ENCODE measurements at regions of chr3 and their contacts with region 1.

Region 1: DNA sequence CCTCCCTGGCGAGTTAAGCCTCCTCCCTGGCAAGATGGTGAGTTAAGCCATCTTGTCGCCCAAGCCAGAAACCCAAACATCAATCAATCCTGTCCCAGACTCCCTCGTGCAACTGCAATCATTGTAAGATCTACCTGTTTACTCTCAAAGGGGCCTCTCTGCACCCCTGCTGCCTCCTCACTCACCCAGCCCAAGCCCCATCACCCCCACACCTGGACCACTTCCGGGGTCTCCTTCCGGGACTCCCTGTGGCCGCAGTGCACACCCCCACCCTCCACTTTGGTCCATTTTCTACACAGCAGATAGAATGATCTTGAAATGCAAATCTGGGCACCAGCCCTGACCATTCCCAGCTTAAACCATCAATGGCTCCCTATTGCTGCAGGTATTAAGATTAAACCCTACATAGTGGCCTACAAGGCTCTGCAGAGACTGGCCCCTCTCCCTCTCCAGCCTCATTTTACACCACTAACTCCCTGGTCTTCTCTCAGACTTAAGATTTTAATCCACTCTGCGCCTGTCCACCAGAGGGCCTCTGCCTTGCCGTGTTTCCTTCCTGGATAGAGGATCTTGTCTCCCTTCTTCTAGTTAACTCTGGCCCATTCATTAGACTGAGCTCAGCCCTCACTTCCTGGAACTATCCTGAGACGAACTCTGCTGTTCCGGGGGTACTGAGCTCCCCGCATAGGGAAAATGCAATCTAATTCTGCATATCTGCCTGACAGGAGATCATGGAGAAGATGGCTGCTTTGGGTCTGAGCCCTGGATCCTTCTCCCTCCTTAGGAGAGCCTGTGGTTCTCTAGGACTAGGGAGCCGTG is 41.9 kb upstream of the SLC6A1 start:
- DNase-seq: peak; percentile 67
- ATAC-seq: peak; percentile 88
- H3K4me3 ChIP-seq: no peak overlapping the region
- H3K27ac ChIP-seq: no peak overlapping the region
- H3K4me1 ChIP-seq: no peaks in the 10 kb centered on the region
- H3K27me3 ChIP-seq: 0 out of 2 replicates have a peak, but pooled peaks cover 22% of the 10 kb centered on the region
- CTCF ChIP-seq: peak; percentile 88

Region 2: GRCh38 chr3:10901296-10901945 is 49.3 kb before region 1 on chr3:
- CTCF ChIA-PET with region 1: no interaction called
- POLR2A ChIA-PET with region 1: no interaction called
- intact Hi-C with region 1: no loop called
- DNase-seq: no peak
- ATAC-seq: no peak
- H3K4me3 ChIP-seq: no peak overlapping the region
- H3K27ac ChIP-seq: no peak overlapping the region
- H3K4me1 ChIP-seq: no peaks in the 10 kb centered on the region
- H3K27me3 ChIP-seq: no peaks in the 10 kb centered on the region
- CTCF ChIP-seq: no peak

Region 3: DNA sequence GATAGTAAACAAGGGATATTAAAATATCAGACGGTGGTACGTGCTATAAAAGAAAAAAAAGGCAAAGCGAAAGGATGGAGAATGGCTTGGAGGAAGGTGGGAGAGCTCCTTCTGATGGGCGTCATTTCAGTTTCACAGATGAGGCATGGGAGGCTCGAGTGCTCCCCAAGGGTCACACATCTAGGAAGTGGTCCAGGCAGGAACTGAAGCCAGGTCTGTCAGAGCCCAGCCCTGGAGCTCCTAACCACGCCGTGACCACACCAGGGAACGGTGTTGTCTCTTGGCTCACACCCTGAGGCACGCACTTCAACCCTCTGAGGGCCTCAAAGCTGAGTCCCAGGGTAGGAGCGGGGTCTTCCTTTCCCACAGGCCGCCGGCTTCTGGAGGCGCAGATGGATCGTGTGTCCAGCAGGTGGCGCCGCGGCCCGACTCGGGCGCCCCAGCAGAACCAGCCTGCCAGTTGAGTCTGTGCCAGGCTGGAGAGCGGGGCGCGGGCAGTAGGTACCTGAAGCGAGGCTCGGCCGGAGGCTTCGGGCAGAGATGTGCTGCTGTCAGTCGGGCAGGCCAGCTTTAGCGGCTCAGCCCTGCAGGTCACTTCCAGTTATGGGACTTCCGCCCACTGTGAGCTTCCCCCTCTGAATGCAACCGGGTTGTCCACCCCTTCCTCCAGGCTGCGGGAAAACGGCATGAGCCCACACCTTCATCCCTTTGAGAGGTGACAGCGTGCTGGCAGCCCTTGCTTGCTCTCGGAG is 110.0 kb after region 1 on chr3:
- CTCF ChIA-PET with region 1: interaction called, 8 read pairs
- POLR2A ChIA-PET with region 1: no interaction called
- intact Hi-C with region 1: loop called (anchors 1 kb)
- DNase-seq: peak; percentile 83
- ATAC-seq: peak; percentile 80
- H3K4me3 ChIP-seq: peak overlapping the region; percentile 44
- H3K27ac ChIP-seq: no peak overlapping the region
- H3K4me1 ChIP-seq: no peaks in the 10 kb centered on the region
- H3K27me3 ChIP-seq: no peaks in the 10 kb centered on the region
- CTCF ChIP-seq: peak; percentile 96

Region 4: GRCh38 chr3:11201246-11202024 is 250.8 kb after region 1 on chr3:
- CTCF ChIA-PET with region 1: no interaction called
- POLR2A ChIA-PET with region 1: no interaction called
- intact Hi-C with region 1: loop called (anchors 2 kb)
- DNase-seq: peak; percentile 81
- ATAC-seq: peak; percentile 81
- H3K4me3 ChIP-seq: no peak overlapping the region
- H3K27ac ChIP-seq: peak overlapping the region; percentile 55
- H3K4me1 ChIP-seq: peaks cover 33% of the 10 kb centered on the region
- H3K27me3 ChIP-seq: no peaks in the 10 kb centered on the region
- CTCF ChIP-seq: no peak